ENCODE measurements at regions of chr18 and their contacts with region 1.

Region 1: DNA sequence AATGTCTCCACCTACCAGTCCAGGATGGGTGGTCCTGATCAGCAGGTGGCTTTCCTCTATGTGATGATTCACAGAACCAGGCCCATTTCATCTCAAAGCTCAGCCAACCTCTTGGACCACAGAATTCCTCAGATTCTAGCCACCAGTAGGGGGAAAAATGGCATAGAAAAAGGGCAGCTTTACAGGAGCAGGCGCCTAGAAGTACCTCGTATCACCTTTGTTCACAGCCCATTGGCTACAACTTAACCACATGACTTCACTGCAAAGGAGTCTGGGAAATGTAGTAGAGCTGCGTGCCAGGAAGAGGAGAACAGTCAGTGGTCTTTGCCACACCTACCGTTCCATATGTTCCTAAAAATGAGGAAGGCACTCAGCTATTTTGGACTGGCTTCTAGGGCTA is 62.8 kb upstream of the DTNA start:
- DNase-seq: no peak
- H3K4me3 Mint-ChIP-seq: no peak overlapping the region
- H3K27ac Mint-ChIP-seq: no peak overlapping the region
- H3K4me1 Mint-ChIP-seq: no peaks in the 10 kb centered on the region
- H3K27me3 Mint-ChIP-seq: peaks cover 2% of the 10 kb centered on the region

Region 2: GRCh38 chr18:34631560-34631959 is 15.7 kb before region 1 on chr18:
- CTCF ChIA-PET with region 1: no interaction called
- POLR2A ChIA-PET with region 1: no interaction called
- DNase-seq: no peak
- H3K4me3 Mint-ChIP-seq: no peak overlapping the region
- H3K27ac Mint-ChIP-seq: no peak overlapping the region
- H3K4me1 Mint-ChIP-seq: no peaks in the 10 kb centered on the region
- H3K27me3 Mint-ChIP-seq: no peaks in the 10 kb centered on the region

Region 3: GRCh38 chr18:34661464-34662111 is 14.3 kb after region 1 on chr18:
- CTCF ChIA-PET with region 1: interaction called, 10 read pairs
- POLR2A ChIA-PET with region 1: no interaction called
- DNase-seq: no peak
- H3K4me3 Mint-ChIP-seq: no peak overlapping the region
- H3K27ac Mint-ChIP-seq: no peak overlapping the region
- H3K4me1 Mint-ChIP-seq: no peaks in the 10 kb centered on the region
- H3K27me3 Mint-ChIP-seq: peaks cover 6% of the 10 kb centered on the region

Region 4: DNA sequence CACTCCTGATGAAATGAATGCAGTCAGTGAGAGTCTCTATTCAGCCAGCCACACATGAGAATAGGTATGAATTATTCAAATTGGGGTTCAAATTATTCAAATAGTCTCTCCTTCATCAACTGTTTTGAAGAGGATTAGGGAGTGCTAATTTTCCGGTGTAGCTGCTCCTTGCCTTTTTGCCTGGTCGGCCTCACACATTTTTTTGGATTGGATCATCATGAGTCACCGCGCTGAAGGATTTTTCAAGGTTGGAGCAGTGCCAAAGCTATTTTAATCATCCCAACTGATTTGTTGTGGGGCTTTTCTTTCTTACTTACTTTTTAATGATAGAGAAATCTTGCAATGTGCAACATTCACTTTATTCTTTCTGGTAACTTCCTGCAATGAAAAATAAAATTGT is 60.4 kb after region 1 on chr18:
- CTCF ChIA-PET with region 1: no interaction called
- POLR2A ChIA-PET with region 1: no interaction called
- DNase-seq: no peak
- H3K4me3 Mint-ChIP-seq: no peak overlapping the region
- H3K27ac Mint-ChIP-seq: no peak overlapping the region
- H3K4me1 Mint-ChIP-seq: no peaks in the 10 kb centered on the region
- H3K27me3 Mint-ChIP-seq: no peaks in the 10 kb centered on the region

Region 5: GRCh38 chr18:34723143-34723542 is 75.9 kb after region 1 on chr18:
- CTCF ChIA-PET with region 1: no interaction called
- POLR2A ChIA-PET with region 1: no interaction called
- DNase-seq: no peak
- H3K4me3 Mint-ChIP-seq: no peak overlapping the region
- H3K27ac Mint-ChIP-seq: no peak overlapping the region
- H3K4me1 Mint-ChIP-seq: no peaks in the 10 kb centered on the region
- H3K27me3 Mint-ChIP-seq: no peaks in the 10 kb centered on the region

Measured in activated CD4-positive, alpha-beta memory T cell treated with anti-CD3 and anti-CD28 coated beads, Interleukin-2, amount 10 ng/mL, durations not matched to agents 7 days and 5 days (primary cell).